PC-3 (cell line): ENCODE measurements at regions of chr6 and their contacts with region 1.

Region 1: DNA sequence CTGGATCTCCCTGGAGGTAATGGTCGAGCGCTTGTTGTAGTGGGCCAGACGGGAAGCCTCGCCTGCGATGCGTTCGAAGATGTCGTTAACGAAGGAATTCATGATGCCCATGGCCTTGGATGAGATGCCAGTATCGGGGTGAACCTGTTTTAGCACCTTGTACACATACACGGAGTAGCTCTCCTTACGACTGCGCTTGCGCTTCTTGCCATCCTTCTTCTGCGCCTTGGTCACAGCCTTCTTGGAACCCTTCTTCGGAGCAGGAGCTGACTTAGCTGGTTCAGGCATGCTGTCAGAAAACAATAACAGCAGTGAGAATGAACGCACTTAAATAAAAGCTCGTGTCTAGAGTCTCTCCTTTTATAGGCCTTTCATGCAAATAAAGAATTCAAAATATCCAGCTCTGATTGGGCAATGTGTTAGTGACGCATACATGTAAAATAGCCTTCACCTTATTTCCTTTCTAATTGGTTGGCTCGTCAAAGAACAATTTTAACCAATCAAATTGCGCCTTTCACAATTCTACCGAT is 129.2 kb downstream of the HFE start:
- DNase-seq: peak; percentile 99
- ATAC-seq: peak; percentile 64
- H3K4me3 ChIP-seq: peak overlapping the region; percentile 86
- H3K27ac ChIP-seq: peak overlapping the region; percentile 63
- H3K4me1 ChIP-seq: peaks cover 6% of the 10 kb centered on the region; the same call in 1 of the 2 replicates
- H3K27me3 ChIP-seq: no peaks in the 10 kb centered on the region
- CTCF ChIP-seq: no peak

Region 2: DNA sequence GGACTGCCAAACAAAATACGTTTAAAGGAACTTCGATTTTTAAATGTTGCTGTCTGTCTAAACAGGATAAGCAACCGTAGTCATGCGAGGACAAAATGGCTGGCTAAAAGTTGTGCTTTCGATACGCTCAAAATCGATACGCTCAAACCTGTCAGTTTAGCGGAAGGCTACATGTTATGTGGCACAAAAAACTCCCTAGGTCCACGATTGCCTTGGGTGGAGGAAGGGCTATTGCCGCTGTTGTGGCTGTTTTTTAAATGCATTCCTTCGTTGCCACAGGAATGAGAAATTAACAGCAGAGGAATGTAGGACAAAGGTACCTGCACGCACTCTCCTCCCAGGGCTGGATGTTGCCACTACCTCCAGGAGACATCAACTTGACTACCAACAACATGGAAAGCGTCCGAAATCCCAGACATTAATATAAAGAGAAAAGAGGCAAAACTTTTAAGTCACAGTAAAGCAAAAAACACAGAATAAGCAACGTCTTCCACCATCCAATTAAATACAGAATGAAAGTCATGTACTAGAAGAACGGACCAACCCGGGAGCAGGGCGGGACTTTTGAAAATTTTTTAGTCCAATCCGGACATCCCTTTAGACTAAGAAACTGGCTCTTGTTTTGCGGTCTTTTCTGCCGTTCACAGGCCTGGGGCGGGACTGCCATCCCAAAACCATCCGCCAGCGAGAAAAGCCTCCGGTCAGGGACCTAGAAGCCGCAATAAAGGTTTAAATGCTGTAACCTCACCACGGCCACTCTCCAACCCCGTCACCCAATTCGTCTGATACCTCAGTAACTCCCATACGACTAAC is 161.4 kb before region 1 on chr6:
- CTCF ChIA-PET with region 1: no interaction called
- POLR2A ChIA-PET with region 1: no interaction called
- intact Hi-C with region 1: loop called (anchors 5 kb)
- DNase-seq: peak; percentile 93
- ATAC-seq: peak; percentile 53
- H3K4me3 ChIP-seq: peak overlapping the region; percentile 78
- H3K27ac ChIP-seq: peak overlapping the region; percentile 81
- H3K4me1 ChIP-seq: peaks cover 10% of the 10 kb centered on the region
- H3K27me3 ChIP-seq: no peaks in the 10 kb centered on the region
- CTCF ChIP-seq: no peak

Region 3: DNA sequence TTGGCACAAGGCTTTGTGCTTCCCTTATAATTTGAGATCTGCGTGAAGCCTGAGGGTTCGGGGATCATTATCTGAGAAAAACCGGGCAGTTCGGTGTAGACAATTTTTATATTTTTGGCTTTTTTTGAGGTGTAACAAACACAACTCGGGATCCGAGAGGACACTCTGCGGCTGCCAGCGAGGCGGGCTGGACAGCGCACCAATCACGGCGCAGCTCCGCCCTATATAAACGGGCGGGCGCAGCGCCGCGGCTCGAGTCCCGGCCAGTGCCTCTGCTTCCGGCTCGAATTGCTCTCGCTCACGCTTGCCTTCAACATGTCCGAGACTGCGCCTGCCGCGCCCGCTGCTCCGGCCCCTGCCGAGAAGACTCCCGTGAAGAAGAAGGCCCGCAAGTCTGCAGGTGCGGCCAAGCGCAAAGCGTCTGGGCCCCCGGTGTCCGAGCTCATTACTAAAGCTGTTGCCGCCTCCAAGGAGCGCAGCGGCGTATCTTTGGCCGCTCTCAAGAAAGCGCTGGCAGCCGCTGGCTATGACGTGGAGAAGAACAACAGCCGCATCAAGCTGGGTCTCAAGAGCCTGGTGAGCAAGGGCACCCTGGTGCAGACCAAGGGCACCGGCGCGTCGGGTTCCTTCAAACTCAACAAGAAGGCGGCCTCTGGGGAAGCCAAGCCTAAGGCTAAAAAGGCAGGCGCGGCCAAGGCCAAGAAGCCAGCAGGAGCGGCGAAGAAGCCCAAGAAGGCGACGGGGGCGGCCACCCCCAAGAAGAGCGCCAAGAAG is 60.2 kb before region 1 on chr6:
- CTCF ChIA-PET with region 1: interaction called, 3 read pairs
- POLR2A ChIA-PET with region 1: interaction called, 60 read pairs
- intact Hi-C with region 1: no loop called
- DNase-seq: peak; percentile 95
- ATAC-seq: peak; percentile 47
- H3K4me3 ChIP-seq: peak overlapping the region; percentile 90
- H3K27ac ChIP-seq: peak overlapping the region; percentile 79
- H3K4me1 ChIP-seq: peaks cover 25% of the 10 kb centered on the region
- H3K27me3 ChIP-seq: no peaks in the 10 kb centered on the region
- CTCF ChIP-seq: no peak

Region 4: DNA sequence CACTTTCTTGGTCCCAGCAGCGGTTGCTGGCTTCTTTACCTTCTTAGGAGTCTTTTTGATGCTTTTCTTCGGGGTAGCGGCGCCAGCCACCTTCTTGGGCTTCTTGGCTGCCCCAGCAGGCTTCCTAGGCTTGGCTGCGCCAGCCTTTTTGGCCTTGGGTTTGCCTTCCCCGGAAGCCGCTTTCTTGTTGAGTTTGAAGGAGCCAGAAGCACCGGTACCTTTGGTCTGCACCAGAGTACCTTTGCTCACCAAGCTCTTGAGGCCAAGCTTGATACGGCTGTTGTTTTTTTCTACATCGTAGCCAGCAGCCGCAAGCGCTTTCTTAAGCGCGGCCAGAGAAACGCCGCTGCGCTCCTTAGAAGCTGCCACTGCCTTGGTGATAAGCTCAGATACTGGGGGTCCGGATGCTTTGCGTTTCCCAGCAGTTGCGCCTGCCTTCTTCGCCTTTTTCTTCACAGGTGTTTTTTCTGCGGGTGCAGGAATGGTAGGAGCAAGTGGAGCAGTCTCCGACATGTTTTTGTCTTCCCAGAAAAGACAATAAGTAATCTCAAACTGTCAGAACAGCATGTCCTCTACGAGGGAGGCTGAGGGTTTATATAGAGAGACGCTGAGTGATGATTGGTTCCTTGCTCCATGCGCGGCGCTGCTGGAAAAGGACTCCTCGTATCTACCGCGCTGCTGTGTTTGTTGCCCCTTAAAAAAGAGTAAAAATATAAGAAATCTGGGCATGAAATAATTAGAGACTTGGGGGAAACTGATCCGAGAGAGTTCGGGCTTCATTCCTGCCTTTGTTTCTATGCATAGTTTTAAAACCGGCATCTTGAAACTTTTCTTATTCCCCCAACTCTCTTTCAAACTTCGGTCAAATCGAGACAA is 18.2 kb after region 1 on chr6:
- CTCF ChIA-PET with region 1: no interaction called
- POLR2A ChIA-PET with region 1: interaction called, 56 read pairs
- intact Hi-C with region 1: loop called (anchors 1 kb)
- DNase-seq: peak; percentile 97
- ATAC-seq: peak; percentile 69
- H3K4me3 ChIP-seq: peak overlapping the region; percentile 68
- H3K27ac ChIP-seq: peak overlapping the region; percentile 79
- H3K4me1 ChIP-seq: peaks cover 40% of the 10 kb centered on the region
- H3K27me3 ChIP-seq: no peaks in the 10 kb centered on the region
- CTCF ChIP-seq: no peak

Region 5: GRCh38 chr6:26537846-26538571 is 321.6 kb after region 1 on chr6 and contains the start of gene HMGN4:
- CTCF ChIA-PET with region 1: no interaction called
- POLR2A ChIA-PET with region 1: no interaction called
- intact Hi-C with region 1: loop called (anchors 5 kb)
- DNase-seq: peak; percentile 89
- ATAC-seq: peak; percentile 77
- H3K4me3 ChIP-seq: peak within 1 kb of the TSS; percentile 98
- H3K27ac ChIP-seq: peak within 1 kb of the TSS; percentile 86
- H3K4me1 ChIP-seq: peaks cover 18% of the 10 kb centered on the region
- H3K27me3 ChIP-seq: no peaks in the 10 kb centered on the region
- CTCF ChIP-seq: no peak; the same call in 1 of the 2 replicates
- total RNA-seq, gene HMGN4: 54.8 and 57.5 TPM in 2 replicates

Region 6: DNA sequence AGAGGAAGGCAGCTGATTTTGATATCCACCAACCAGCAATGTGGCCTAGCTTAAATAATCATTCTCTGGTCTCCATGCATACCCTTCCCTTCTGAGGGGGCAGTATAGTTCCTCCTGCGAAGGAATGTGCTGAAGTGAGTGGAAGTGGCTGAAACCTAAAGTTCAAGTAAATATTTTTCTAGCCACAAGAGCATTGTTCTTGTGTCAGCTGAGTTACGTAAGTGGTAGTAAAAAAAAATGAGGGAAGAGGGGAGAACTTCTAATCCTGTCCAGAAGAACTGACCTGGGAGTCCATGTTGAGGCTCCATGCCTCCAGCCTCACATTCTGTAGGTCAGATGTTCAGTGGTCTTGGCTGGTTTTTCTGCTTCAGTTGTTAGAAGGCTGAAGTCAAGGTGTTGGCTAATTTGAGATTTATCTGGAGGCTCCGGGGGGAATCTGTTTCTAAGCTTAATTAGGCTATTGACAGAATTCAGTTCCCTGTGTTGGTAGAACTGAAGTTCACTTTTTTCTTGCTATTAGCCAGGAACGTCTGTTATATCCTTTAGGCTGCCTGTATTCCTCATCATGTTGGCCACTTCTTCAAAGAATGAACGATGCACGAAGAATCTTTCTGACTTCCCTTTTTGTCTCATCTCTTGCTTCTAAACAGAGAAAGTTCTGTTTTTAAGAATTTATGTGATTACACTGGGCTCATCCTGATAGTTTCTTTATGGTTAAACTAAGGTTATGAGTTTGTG is 824.0 kb after region 1 on chr6:
- CTCF ChIA-PET with region 1: no interaction called
- POLR2A ChIA-PET with region 1: no interaction called
- intact Hi-C with region 1: no loop called
- DNase-seq: no peak
- ATAC-seq: no peak
- H3K4me3 ChIP-seq: no peak overlapping the region
- H3K27ac ChIP-seq: no peak overlapping the region
- H3K4me1 ChIP-seq: no peaks in the 10 kb centered on the region
- H3K27me3 ChIP-seq: no peaks in the 10 kb centered on the region; the same call in 1 of the 2 replicates
- CTCF ChIP-seq: no peak